CD4-positive, alpha-beta T cell (primary cell): ENCODE measurements at regions of chr2 and their contacts with region 1.

Region 1: GRCh38 chr2:84925724-84926376 is 20.4 kb downstream of the TMSB10 start:
- DNase-seq: peak; percentile 95 to 100 (median 99)
- ATAC-seq: peak; percentile 80
- H3K4me3 ChIP-seq: peak overlapping the region; percentile 73
- H3K4me3 Mint-ChIP-seq: peak overlapping the region; percentile 91
- H3K27ac ChIP-seq: peak overlapping the region; percentile 20 to 69
- H3K27ac Mint-ChIP-seq: peak overlapping the region; percentile 85
- H3K4me1 ChIP-seq: peaks cover 56% of the 10 kb centered on the region
- H3K4me1 Mint-ChIP-seq: peaks cover 38% of the 10 kb centered on the region
- H3K27me3 ChIP-seq: no peaks in the 10 kb centered on the region
- H3K27me3 Mint-ChIP-seq: no peaks in the 10 kb centered on the region
- CTCF ChIP-seq: peak; percentile 99

Region 2: DNA sequence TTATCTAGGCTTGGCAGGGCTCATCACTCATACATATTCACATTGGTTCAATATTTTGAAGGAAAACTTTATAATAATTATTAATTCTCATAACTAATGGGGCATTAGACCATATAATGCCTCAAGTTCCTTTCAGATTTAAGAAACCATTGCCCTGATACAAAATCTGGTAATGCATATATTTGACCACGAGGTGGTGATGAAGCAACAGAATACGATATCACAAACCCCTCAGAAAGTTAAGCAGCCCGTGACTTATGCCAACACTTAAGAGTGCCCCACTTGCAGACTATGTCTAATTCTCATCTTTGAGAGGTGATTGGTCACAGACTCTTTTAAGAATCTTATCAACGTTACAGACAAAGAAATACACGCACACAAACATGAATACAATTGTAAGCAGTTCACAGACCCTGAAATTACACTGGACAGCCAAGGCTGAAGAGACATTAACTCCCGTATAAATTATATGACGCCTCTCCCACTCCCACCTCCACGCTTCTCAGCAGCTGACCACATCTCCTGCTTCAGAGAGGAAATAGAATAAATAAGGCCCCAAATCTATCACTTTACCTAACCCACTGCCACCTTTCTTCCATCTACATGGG is 430.2 kb before region 1 on chr2:
- CTCF ChIA-PET with region 1: interaction called, 18 read pairs
- POLR2A ChIA-PET with region 1: interaction called, 7 read pairs
- intact Hi-C with region 1: loop called (anchors 1 kb)
- DNase-seq: peak in 9 of 14 experiments; percentile 5 to 86 (median 26)
- ATAC-seq: peak; percentile 98
- H3K4me3 ChIP-seq: no peak overlapping the region
- H3K4me3 Mint-ChIP-seq: no peak overlapping the region
- H3K27ac ChIP-seq: no peak overlapping the region
- H3K27ac Mint-ChIP-seq: peak overlapping the region; percentile 5
- H3K4me1 ChIP-seq: peaks cover 4% of the 10 kb centered on the region
- H3K4me1 Mint-ChIP-seq: peaks cover 27% of the 10 kb centered on the region
- H3K27me3 ChIP-seq: no peaks in the 10 kb centered on the region
- H3K27me3 Mint-ChIP-seq: no peaks in the 10 kb centered on the region
- CTCF ChIP-seq: peak; percentile 77

Region 3: GRCh38 chr2:84840306-84840705 is 85.5 kb before region 1 on chr2:
- CTCF ChIA-PET with region 1: interaction called, 19 read pairs
- POLR2A ChIA-PET with region 1: interaction called, 14 read pairs
- intact Hi-C with region 1: loop called in 1 of 2 experiments (anchors 5 kb)
- DNase-seq: peak in 1 of 14 experiments; percentile 59
- ATAC-seq: peak; percentile 28
- H3K4me3 ChIP-seq: peak overlapping the region; percentile 22
- H3K4me3 Mint-ChIP-seq: peak overlapping the region; percentile 80
- H3K27ac ChIP-seq: peak overlapping the region; percentile 81 to 90
- H3K27ac Mint-ChIP-seq: peak overlapping the region; percentile 96
- H3K4me1 ChIP-seq: peaks cover 73% of the 10 kb centered on the region
- H3K4me1 Mint-ChIP-seq: peaks cover 91% of the 10 kb centered on the region
- H3K27me3 ChIP-seq: no peaks in the 10 kb centered on the region
- H3K27me3 Mint-ChIP-seq: no peaks in the 10 kb centered on the region
- CTCF ChIP-seq: no peak

Region 4: DNA sequence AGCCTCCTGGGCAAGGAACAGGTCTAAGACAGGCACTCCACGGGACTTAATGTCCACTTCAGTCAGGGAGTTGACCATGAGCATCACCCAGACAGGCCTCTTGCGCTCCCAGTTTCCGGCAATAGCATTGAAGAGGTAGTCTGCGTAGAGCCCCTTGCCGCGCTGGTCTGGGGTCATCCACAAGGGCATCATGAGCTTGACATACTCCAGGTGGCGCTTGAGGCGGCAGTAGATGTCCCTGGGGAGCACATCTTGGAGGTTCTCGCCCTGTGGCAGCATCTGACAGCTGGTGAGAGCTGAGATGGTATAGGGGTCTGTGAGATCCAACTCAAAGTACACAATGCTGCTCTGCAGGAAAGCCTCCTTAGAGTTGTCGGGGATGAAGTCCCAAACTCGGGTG is 55.5 kb before region 1 on chr2:
- CTCF ChIA-PET with region 1: interaction called, 12 read pairs
- POLR2A ChIA-PET with region 1: interaction called, 8 read pairs
- intact Hi-C with region 1: no loop called
- DNase-seq: peak in 2 of 14 experiments; percentile 31 to 37
- ATAC-seq: no peak
- H3K4me3 ChIP-seq: no peak overlapping the region
- H3K4me3 Mint-ChIP-seq: peak overlapping the region; percentile 60
- H3K27ac ChIP-seq: peak overlapping the region in 1 of 2 donors; percentile 41
- H3K27ac Mint-ChIP-seq: peak overlapping the region; percentile 92
- H3K4me1 ChIP-seq: peaks cover 60% of the 10 kb centered on the region
- H3K4me1 Mint-ChIP-seq: peaks cover 89% of the 10 kb centered on the region
- H3K27me3 ChIP-seq: no peaks in the 10 kb centered on the region
- H3K27me3 Mint-ChIP-seq: no peaks in the 10 kb centered on the region
- CTCF ChIP-seq: no peak

Region 5: DNA sequence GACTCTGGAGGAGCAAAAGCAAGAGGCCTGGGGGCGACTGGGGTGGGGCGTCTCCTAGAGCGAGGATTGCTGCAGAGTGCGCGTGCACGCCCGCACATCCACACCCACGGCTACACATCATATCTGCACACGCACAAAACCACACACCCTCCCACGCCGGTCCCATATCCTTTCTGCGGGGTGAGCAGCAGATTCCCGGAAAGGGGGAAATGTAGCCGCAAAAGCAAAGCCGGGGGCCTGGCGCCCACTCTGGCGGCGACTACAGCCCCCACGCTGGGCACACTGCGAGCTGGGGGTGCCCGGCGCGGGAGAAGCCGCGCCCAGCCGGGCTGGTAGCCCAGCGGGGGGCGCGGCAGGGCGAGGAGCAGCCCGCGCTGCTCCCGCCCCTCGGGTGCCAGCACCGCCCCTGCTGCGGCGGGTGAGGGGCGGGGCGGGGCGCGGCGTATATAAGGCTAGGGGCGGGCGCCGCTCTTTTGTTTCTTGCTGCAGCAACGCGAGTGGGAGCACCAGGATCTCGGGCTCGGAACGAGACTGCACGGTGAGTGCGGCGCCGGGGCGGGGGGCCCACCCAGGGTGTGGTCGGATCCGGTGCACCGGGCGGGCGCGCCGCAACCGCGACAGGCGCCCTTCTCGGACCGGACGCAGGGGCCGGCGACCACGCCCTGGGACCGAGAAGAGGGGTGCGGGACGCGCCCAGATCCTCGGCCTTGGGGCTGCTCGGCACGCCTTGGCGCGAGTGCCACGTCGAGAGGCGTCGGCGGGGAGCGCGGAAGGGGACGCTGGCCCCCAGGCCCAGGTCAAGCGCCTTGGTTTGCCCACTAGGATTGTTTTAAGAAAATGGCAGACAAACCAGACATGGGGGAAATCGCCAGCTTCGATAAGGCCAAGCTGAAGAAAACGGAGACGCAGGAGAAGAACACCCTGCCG is 20.4 kb before region 1 on chr2 and contains the start of gene TMSB10:
- CTCF ChIA-PET with region 1: interaction called, 88 read pairs
- POLR2A ChIA-PET with region 1: interaction called, 147 read pairs
- intact Hi-C with region 1: loop called (anchors 1 kb)
- DNase-seq: peak; percentile 84 to 95 (median 92)
- ATAC-seq: peak; percentile 70
- H3K4me3 ChIP-seq: peak within 1 kb of the TSS; percentile 74
- H3K4me3 Mint-ChIP-seq: peak within 1 kb of the TSS; percentile 98
- H3K27ac ChIP-seq: peak within 1 kb of the TSS; percentile 57 to 85
- H3K27ac Mint-ChIP-seq: peak within 1 kb of the TSS; percentile 93
- H3K4me1 ChIP-seq: peaks cover 42% of the 10 kb centered on the region
- H3K4me1 Mint-ChIP-seq: peaks cover 76% of the 10 kb centered on the region
- H3K27me3 ChIP-seq: no peaks in the 10 kb centered on the region
- H3K27me3 Mint-ChIP-seq: no peaks in the 10 kb centered on the region
- CTCF ChIP-seq: no peak
- total RNA-seq, gene TMSB10: 1,969 to 2,001 TPM

Region 6: GRCh38 chr2:84970868-84971509 is 45.1 kb after region 1 on chr2 and contains the start of gene KCMF1:
- CTCF ChIA-PET with region 1: interaction called, 15 read pairs
- POLR2A ChIA-PET with region 1: interaction called, 29 read pairs
- intact Hi-C with region 1: loop called (anchors 5 kb)
- DNase-seq: peak; percentile 44 to 82 (median 63)
- ATAC-seq: peak; percentile 49
- H3K4me3 ChIP-seq: peak within 1 kb of the TSS; percentile 99
- H3K4me3 Mint-ChIP-seq: peak within 1 kb of the TSS; percentile 99
- H3K27ac ChIP-seq: peak within 1 kb of the TSS; percentile 84 to 91
- H3K27ac Mint-ChIP-seq: peak within 1 kb of the TSS; percentile 98
- H3K4me1 ChIP-seq: peaks cover 28% of the 10 kb centered on the region
- H3K4me1 Mint-ChIP-seq: peaks cover 61% of the 10 kb centered on the region
- H3K27me3 ChIP-seq: no peaks in the 10 kb centered on the region
- H3K27me3 Mint-ChIP-seq: no peaks in the 10 kb centered on the region
- CTCF ChIP-seq: no peak
- total RNA-seq, gene KCMF1: 72.4 to 78.0 TPM

Region 7: DNA sequence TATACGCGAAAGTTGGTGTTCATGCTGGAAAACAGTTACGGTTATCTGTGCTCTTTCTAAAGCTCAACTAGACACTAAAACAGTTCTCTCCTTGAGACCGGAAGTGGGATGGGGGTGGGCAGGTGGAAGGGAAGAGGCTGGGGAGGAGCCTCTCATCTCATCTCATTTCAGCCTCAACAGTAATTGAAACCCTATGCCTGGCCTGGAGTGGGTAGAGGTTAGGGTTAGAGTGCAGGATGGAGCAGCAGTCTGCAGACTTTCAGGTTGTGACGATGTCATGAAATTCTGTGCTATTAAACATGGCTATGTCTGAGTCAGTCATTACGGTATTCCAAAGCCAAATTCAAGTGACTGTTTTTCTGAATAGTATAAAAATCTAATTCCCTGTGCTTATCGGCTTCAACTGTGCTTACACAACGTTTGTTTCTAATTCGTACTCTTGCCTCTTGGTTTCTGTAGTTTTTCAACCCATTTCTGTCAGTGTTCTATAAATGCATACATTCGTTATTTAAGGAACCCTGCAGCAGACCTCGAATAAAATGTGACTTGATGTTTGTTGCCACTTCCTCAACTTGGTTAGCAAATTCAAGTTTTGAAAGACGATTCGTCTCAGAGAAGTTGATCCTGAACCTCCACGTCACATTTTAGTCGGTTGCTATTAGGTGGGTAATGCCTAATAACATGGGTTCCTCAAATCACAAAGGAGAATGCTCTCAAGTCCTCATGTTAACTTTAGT is 131.5 kb after region 1 on chr2:
- CTCF ChIA-PET with region 1: no interaction called
- POLR2A ChIA-PET with region 1: no interaction called
- intact Hi-C with region 1: no loop called
- DNase-seq: peak in 1 of 14 experiments; percentile 14
- ATAC-seq: no peak
- H3K4me3 ChIP-seq: no peak overlapping the region
- H3K4me3 Mint-ChIP-seq: no peak overlapping the region
- H3K27ac ChIP-seq: no peak overlapping the region
- H3K27ac Mint-ChIP-seq: peak overlapping the region; percentile 57
- H3K4me1 ChIP-seq: peaks cover 5% of the 10 kb centered on the region
- H3K4me1 Mint-ChIP-seq: peaks cover 46% of the 10 kb centered on the region
- H3K27me3 ChIP-seq: no peaks in the 10 kb centered on the region
- H3K27me3 Mint-ChIP-seq: no peaks in the 10 kb centered on the region
- CTCF ChIP-seq: no peak

Region 8: DNA sequence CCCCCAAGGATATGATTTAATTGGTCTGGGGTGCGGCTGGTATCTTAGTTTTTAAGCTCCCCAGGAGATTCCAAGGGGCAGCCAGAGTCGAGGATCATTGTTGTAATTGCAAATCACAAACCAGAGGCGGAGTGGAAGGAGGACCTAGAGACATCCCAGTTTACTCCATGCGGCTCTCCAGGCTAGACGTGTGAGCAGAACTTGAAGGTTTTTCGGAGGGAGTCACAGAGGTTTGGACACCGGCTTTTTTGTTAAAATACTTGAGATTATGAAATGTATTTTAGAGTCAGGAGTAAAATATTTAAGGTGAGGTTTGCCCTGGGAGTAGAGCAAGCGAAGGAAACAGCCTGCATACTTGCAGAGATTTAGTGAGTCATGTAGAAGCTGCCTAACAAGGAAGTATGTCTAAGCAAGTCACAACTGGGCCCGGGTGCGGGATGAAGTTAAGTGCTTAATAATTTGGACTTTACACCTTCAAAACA is 362.4 kb after region 1 on chr2:
- CTCF ChIA-PET with region 1: no interaction called
- POLR2A ChIA-PET with region 1: no interaction called
- intact Hi-C with region 1: loop called in 1 of 2 experiments (anchors 2 kb)
- DNase-seq: no peak
- ATAC-seq: no peak
- H3K4me3 ChIP-seq: no peak overlapping the region
- H3K4me3 Mint-ChIP-seq: no peak overlapping the region
- H3K27ac ChIP-seq: no peak overlapping the region
- H3K27ac Mint-ChIP-seq: no peak overlapping the region
- H3K4me1 ChIP-seq: peaks cover 24% of the 10 kb centered on the region
- H3K4me1 Mint-ChIP-seq: peaks cover 30% of the 10 kb centered on the region
- H3K27me3 ChIP-seq: no peaks in the 10 kb centered on the region
- H3K27me3 Mint-ChIP-seq: no peaks in the 10 kb centered on the region
- CTCF ChIP-seq: no peak